Right lobe of liver (tissue), 6 donors: ENCODE measurements at regions of chr3 and their contacts with region 1.

Region 1: GRCh38 chr3:196047391-196048030 is 34.4 kb downstream of the TFRC start:
- DNase-seq: no peak
- ATAC-seq: peak; percentile 56 to 74 (median 65)
- H3K4me3 ChIP-seq: no peak overlapping the region
- H3K27ac ChIP-seq: no peak overlapping the region
- H3K4me1 ChIP-seq: peaks cover 0 to 15% (median 3%) of the 10 kb centered on the region in 4 donors
- H3K27me3 ChIP-seq: no peaks in the 10 kb centered on the region
- CTCF ChIP-seq: no peak
- POLR2A ChIP-seq: no peak

Region 2: DNA sequence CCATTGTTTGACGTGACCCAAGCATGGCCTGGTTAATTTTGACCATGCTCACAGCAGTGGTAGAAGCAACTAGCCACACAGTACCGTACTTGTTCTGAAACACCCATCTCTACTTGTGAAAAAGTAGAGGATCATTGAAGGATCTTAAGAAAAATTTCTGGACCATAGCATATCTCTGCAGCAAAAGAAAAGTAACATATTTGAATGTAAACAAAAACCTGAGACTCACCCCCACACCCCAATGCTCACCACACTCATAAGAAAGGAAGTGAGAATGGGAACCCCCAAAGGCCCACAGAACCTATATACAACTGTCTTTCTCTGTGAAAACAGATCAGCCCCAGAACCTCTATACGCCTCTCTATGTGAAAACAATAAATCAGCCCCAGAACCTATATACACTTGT is 68.2 kb after region 1 on chr3:
- intact Hi-C with region 1: no loop called
- DNase-seq: no peak
- ATAC-seq: no peak
- H3K4me3 ChIP-seq: no peak overlapping the region
- H3K27ac ChIP-seq: no peak overlapping the region
- H3K4me1 ChIP-seq: no peaks in the 10 kb centered on the region
- H3K27me3 ChIP-seq: no peaks in the 10 kb centered on the region
- CTCF ChIP-seq: no peak
- POLR2A ChIP-seq: no peak

Region 3: DNA sequence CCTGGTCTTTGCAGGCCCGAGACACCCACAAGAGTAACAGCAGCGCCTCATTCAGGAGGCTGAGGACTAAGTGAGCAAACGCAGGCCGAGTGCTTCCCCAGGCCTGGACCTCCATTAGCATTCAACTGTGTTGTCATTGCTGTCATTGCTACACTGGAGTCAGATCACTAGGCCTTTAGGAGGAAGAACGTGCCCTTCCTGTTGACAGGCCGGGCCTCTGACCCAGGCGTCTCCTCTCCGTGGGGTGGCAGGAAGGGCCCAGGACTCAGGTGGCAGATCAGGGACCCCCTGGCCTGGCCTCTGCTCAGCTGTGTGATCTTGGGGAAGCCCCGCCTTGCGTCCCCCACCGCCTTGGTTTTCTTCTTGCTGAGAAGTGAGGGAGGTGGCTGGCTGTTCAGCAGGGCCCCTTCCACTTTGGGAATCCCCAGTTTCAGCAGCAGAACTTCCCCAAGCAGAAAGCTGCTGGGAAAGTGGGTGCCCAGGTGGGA is 144.6 kb after region 1 on chr3:
- intact Hi-C with region 1: loop called in 1 of 2 experiments (anchors 10 kb)
- DNase-seq: no peak
- ATAC-seq: peak; percentile 20 to 37 (median 32)
- H3K4me3 ChIP-seq: no peak overlapping the region
- H3K27ac ChIP-seq: peak overlapping the region; percentile 15 to 54 (median 40)
- H3K4me1 ChIP-seq: peaks cover 0 to 23% (median 0%) of the 10 kb centered on the region in 4 donors
- H3K27me3 ChIP-seq: no peaks in the 10 kb centered on the region
- CTCF ChIP-seq: no peak
- POLR2A ChIP-seq: no peak